ENCODE measurements at regions of chr3 and their contacts with region 1.

Region 1: GRCh38 chr3:55013145-55013925 is 85.5 kb upstream of the LRTM1 start:
- DNase-seq: no peak
- H3K4me3 ChIP-seq: no peak overlapping the region
- H3K27ac ChIP-seq: no peak overlapping the region
- H3K4me1 ChIP-seq: no peaks in the 10 kb centered on the region
- H3K27me3 ChIP-seq: no peaks in the 10 kb centered on the region
- CTCF ChIP-seq: no peak
- POLR2A ChIP-seq: no peak

Region 2: DNA sequence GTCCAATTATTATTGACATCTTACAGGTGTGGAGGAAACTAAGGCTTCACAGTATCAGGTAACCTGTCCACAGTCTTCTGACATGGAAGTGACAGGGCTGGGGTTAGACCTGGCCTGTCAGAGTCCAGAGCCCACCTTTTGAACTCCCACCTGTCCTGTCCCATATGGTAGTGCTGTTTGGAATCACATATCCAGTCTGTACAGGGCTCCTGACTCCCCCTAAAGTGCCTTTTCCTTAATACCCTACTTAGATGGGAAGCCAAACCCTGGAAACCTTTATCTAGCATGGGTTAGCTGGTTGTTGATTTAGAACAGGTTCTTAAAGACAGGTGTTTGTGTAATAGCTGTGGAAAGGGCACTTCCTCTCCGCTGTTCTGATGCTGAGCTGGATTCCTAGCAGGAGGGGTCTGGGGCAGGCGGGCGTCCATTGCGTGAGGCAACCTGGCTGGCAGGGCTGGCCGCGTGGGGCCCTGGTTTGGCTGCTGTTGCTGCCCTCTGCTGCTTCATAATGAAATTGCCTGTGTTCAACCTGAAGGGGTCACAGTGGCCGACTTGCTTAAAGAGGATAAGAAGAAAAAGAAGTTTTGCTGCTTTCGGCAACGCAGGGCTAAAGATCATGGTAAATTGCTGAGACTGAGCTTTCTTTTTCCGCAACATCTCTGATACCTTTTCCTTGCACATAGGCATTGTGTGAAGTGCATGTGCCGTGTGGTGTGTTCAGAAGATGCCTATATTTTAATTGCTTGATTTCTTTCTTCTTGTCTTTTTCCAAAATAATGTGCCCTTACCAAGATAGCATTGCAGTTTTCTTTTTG is 1303.3 kb before region 1 on chr3:
- intact Hi-C with region 1: loop called (anchors 10 kb)
- DNase-seq: peak; percentile 47 to 71
- H3K4me3 ChIP-seq: no peak overlapping the region
- H3K27ac ChIP-seq: no peak overlapping the region
- H3K4me1 ChIP-seq: no peaks in the 10 kb centered on the region
- H3K27me3 ChIP-seq: no peaks in the 10 kb centered on the region
- CTCF ChIP-seq: peak; percentile 61 to 86 (median 72)
- POLR2A ChIP-seq: no peak

Region 3: DNA sequence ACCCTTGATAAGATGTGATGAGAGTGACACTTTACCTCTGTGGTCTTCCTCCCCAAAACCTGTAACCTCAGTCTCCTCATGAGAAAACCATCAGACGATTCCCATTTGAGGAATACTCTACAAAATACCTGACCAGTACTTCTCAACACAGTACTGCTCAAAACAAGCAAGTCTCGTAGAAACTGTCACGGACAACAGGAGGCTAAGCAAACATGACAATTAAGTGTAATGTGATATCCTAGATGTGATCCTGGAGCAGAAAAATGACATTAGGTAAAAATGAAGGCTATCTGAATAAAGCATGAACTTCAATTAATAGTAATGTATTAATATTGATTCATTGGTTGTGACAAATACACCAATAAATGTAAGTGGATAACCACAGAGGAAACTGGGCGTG is 777.3 kb before region 1 on chr3:
- intact Hi-C with region 1: loop called (anchors 5 kb)
- DNase-seq: no peak
- H3K4me3 ChIP-seq: no peak overlapping the region
- H3K27ac ChIP-seq: no peak overlapping the region
- H3K4me1 ChIP-seq: no peaks in the 10 kb centered on the region
- H3K27me3 ChIP-seq: no peaks in the 10 kb centered on the region
- CTCF ChIP-seq: no peak
- POLR2A ChIP-seq: no peak

Region 4: DNA sequence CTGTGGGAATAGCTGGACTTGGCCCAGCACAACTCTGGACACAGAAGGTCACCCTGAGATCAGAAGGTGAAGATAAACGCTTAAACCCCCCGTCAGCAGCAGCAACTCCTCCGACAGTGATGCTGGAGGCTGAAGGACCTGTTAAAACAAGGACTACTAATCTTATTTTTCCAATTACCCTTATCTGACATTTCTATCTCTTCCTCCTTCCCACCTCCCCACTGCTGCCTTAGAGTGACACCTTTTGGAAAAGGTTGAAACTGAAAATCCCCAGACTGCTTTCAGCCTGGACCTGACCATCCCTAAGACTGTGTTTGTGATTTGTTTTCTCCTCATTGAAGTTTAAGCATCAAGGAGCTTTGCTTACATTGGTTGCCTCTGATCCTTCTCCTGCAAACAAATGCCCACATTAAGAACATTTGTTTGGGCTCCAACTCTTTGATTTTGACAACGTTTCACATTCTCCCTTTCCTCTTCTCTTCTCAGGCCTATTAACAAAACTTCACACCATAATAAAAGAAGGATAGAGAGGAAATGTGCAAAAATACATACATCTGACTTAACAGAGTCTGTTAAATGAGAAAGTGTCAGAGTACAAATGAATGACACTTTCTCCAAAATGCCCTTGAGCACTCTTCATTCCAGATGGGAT is 884.4 kb after region 1 on chr3:
- intact Hi-C with region 1: loop called (anchors 5 kb)
- DNase-seq: no peak
- H3K4me3 ChIP-seq: no peak overlapping the region
- H3K27ac ChIP-seq: no peak overlapping the region
- H3K4me1 ChIP-seq: no peaks in the 10 kb centered on the region
- H3K27me3 ChIP-seq: no peaks in the 10 kb centered on the region
- CTCF ChIP-seq: peak in 2 of 3 donors; percentile 42 to 46
- POLR2A ChIP-seq: no peak

Measured in breast epithelium (tissue), 4 donors.